Calu3 (cell line): ENCODE measurements at regions of chr4 and their contacts with region 1.

Region 1: DNA sequence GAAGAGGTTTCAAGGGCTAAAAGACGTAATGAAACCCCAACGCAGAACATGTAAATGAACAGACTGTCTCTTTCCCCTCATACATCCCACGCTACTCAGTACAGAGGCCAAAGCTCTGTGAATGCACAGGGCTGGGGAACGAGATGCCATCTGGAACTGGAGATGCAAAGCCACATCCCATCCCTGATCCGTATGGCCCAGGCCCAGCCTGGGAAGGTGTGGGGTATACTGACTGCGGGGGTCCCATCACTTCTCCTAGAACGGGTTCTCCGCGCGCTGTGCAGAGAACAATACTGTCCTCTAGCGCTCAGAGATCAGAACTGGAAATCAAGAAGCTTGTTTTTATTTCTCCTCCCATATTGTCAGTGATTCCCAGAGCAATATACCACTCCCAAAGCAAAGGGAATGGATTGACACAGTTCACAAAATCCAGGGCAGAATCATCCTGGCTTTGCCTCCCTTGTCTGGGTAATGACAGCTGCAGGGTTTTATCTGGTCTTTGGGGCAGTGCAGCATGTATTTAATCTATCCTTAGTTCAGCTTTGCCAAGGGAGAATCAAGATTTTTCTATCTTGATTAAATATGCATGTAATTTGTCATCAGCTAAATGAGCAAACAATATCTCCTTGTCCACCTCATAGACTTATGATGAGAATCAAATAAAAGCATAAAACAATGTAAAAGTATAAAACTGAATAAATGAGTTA is 47.3 kb upstream of the TLR3 start:
- DNase-seq: peak; percentile 14
- H3K4me3 Mint-ChIP-seq: no peak overlapping the region
- H3K27ac Mint-ChIP-seq: no peak overlapping the region
- H3K4me1 Mint-ChIP-seq: no peaks in the 10 kb centered on the region
- H3K27me3 Mint-ChIP-seq: no peaks in the 10 kb centered on the region
- CTCF ChIP-seq: peak; percentile 41

Region 2: GRCh38 chr4:185640811-185641675 is 380.6 kb before region 1 on chr4:
- CTCF ChIA-PET with region 1: interaction called, 14 read pairs
- intact Hi-C with region 1: loop called (anchors 1 kb)
- DNase-seq: no peak
- H3K4me3 Mint-ChIP-seq: no peak overlapping the region
- H3K27ac Mint-ChIP-seq: no peak overlapping the region
- H3K4me1 Mint-ChIP-seq: no peaks in the 10 kb centered on the region
- H3K27me3 Mint-ChIP-seq: no peaks in the 10 kb centered on the region
- CTCF ChIP-seq: no peak

Region 3: GRCh38 chr4:185811509-185812364 is 209.9 kb before region 1 on chr4 and contains the start of gene SORBS2:
- CTCF ChIA-PET with region 1: interaction called, 3 read pairs
- intact Hi-C with region 1: loop called (anchors 10 kb)
- DNase-seq: peak; percentile 48
- H3K4me3 Mint-ChIP-seq: peak within 1 kb of the TSS; percentile 80
- H3K27ac Mint-ChIP-seq: peak within 1 kb of the TSS; percentile 88
- H3K4me1 Mint-ChIP-seq: peaks cover 16% of the 10 kb centered on the region
- H3K27me3 Mint-ChIP-seq: no peaks in the 10 kb centered on the region
- CTCF ChIP-seq: no peak
- total RNA-seq, gene SORBS2: 37.2 and 52.8 TPM in 2 replicates

Region 4: DNA sequence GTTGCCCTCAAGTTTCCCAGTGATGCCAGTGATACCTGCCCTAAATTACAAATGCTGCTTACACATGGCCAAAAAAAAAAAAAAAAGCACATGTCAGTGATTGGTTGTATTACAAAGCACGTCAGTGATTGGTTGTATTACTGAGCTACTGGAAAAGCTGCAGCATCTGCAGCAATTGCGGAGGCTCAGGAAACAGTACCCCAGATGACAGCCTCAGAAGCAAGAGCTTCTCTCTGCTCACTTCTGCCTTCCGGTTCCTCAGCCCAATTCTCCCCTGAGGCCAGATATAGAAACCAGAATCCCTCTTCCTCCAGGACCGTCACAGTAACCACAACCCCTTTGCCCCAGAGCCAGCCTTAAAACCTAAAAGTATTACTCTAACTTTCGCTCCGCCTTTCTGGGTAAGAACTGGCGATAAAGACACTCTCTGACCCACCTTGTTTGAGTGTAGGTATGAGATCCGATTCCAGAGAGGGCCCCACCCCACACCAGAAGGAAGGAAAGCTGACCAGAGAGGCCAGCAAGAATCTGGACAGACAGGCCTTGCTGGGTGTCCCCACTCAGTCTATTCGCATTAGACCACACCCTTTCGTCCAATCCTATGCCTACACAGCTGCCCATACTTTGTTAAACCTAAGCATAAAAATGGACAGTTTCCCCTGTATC is 124.7 kb before region 1 on chr4:
- CTCF ChIA-PET with region 1: interaction called, 17 read pairs
- intact Hi-C with region 1: loop called (anchors 2 kb)
- DNase-seq: peak; percentile 76
- H3K4me3 Mint-ChIP-seq: peak overlapping the region; percentile 72
- H3K27ac Mint-ChIP-seq: peak overlapping the region; percentile 96
- H3K4me1 Mint-ChIP-seq: peaks cover 37% of the 10 kb centered on the region
- H3K27me3 Mint-ChIP-seq: no peaks in the 10 kb centered on the region
- CTCF ChIP-seq: no peak

Region 5: GRCh38 chr4:185902655-185903054 is 119.0 kb before region 1 on chr4:
- CTCF ChIA-PET with region 1: interaction called, 12 read pairs
- intact Hi-C with region 1: no loop called
- DNase-seq: no peak
- H3K4me3 Mint-ChIP-seq: no peak overlapping the region
- H3K27ac Mint-ChIP-seq: no peak overlapping the region
- H3K4me1 Mint-ChIP-seq: peaks cover 12% of the 10 kb centered on the region
- H3K27me3 Mint-ChIP-seq: no peaks in the 10 kb centered on the region
- CTCF ChIP-seq: no peak

Region 6: GRCh38 chr4:186074189-186074588 is 52.6 kb after region 1 on chr4:
- CTCF ChIA-PET with region 1: no interaction called
- intact Hi-C with region 1: no loop called
- DNase-seq: no peak
- H3K4me3 Mint-ChIP-seq: no peak overlapping the region
- H3K27ac Mint-ChIP-seq: no peak overlapping the region
- H3K4me1 Mint-ChIP-seq: peaks cover 14% of the 10 kb centered on the region
- H3K27me3 Mint-ChIP-seq: no peaks in the 10 kb centered on the region
- CTCF ChIP-seq: no peak

Region 7: DNA sequence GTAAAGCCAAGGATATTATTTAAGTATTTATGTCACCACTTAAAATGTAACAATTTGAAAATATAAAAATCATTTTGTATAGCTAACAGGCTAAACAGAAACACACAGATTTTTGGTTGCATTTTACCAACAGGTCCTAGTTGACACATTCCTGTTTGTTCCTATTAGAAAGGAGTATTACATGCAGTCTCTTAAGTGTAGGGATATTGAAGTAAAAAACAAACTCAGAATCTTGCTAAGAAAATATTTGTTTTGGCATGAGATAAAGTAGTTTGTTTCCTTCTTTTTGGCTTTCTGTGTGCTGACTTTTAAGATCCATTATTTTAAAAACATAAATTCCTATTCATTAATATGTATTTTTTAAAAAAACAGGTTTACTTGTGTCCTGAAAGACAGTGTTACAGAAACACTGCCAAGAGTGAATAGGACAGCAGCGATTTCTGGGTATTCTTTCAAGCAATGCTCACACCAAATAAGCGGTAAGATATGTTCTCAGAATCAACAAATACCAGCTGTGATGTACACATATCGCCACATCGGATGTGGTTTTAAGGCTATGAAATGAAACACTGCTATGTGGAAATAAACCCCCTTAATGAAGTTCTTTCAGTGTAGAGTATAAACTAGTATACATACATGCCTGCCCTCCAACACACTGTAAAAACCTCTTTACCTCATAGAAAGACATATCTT is 251.2 kb after region 1 on chr4:
- CTCF ChIA-PET with region 1: no interaction called
- intact Hi-C with region 1: no loop called
- DNase-seq: no peak
- H3K4me3 Mint-ChIP-seq: no peak overlapping the region
- H3K27ac Mint-ChIP-seq: no peak overlapping the region
- H3K4me1 Mint-ChIP-seq: no peaks in the 10 kb centered on the region
- H3K27me3 Mint-ChIP-seq: no peaks in the 10 kb centered on the region
- CTCF ChIP-seq: no peak